Calu3 (cell line): ENCODE measurements at regions of chr1 and their contacts with region 1.

Region 1: GRCh38 chr1:67500413-67500959 is 70.3 kb upstream of the SERBP1 start:
- DNase-seq: peak; percentile 87
- H3K4me3 Mint-ChIP-seq: peak overlapping the region; percentile 36
- H3K27ac Mint-ChIP-seq: no peak overlapping the region
- H3K4me1 Mint-ChIP-seq: no peaks in the 10 kb centered on the region
- H3K27me3 Mint-ChIP-seq: peaks cover 20% of the 10 kb centered on the region
- CTCF ChIP-seq: peak; percentile 89

Region 2: GRCh38 chr1:66996018-66996682 is 504.3 kb before region 1 on chr1:
- CTCF ChIA-PET with region 1: no interaction called
- intact Hi-C with region 1: loop called (anchors 5 kb)
- DNase-seq: peak; percentile 59
- H3K4me3 Mint-ChIP-seq: no peak overlapping the region
- H3K27ac Mint-ChIP-seq: no peak overlapping the region
- H3K4me1 Mint-ChIP-seq: no peaks in the 10 kb centered on the region
- H3K27me3 Mint-ChIP-seq: no peaks in the 10 kb centered on the region
- CTCF ChIP-seq: peak; percentile 65

Region 3: GRCh38 chr1:67214420-67215174 is 285.9 kb before region 1 on chr1:
- CTCF ChIA-PET with region 1: interaction called, 19 read pairs
- intact Hi-C with region 1: loop called (anchors 2 kb)
- DNase-seq: peak; percentile 64
- H3K4me3 Mint-ChIP-seq: no peak overlapping the region
- H3K27ac Mint-ChIP-seq: no peak overlapping the region
- H3K4me1 Mint-ChIP-seq: no peaks in the 10 kb centered on the region
- H3K27me3 Mint-ChIP-seq: peaks cover 4% of the 10 kb centered on the region
- CTCF ChIP-seq: no peak

Region 4: GRCh38 chr1:67230539-67230938 is 269.9 kb before region 1 on chr1:
- CTCF ChIA-PET with region 1: interaction called, 8 read pairs
- intact Hi-C with region 1: loop called (anchors 1 kb)
- DNase-seq: no peak
- H3K4me3 Mint-ChIP-seq: no peak overlapping the region
- H3K27ac Mint-ChIP-seq: no peak overlapping the region
- H3K4me1 Mint-ChIP-seq: peaks cover 8% of the 10 kb centered on the region
- H3K27me3 Mint-ChIP-seq: peaks cover 19% of the 10 kb centered on the region
- CTCF ChIP-seq: no peak

Region 5: GRCh38 chr1:67347688-67348472 is 152.6 kb before region 1 on chr1:
- CTCF ChIA-PET with region 1: interaction called, 8 read pairs
- intact Hi-C with region 1: loop called (anchors 1 kb)
- DNase-seq: peak; percentile 19
- H3K4me3 Mint-ChIP-seq: no peak overlapping the region
- H3K27ac Mint-ChIP-seq: no peak overlapping the region
- H3K4me1 Mint-ChIP-seq: no peaks in the 10 kb centered on the region
- H3K27me3 Mint-ChIP-seq: no peaks in the 10 kb centered on the region
- CTCF ChIP-seq: peak; percentile 41

Region 6: DNA sequence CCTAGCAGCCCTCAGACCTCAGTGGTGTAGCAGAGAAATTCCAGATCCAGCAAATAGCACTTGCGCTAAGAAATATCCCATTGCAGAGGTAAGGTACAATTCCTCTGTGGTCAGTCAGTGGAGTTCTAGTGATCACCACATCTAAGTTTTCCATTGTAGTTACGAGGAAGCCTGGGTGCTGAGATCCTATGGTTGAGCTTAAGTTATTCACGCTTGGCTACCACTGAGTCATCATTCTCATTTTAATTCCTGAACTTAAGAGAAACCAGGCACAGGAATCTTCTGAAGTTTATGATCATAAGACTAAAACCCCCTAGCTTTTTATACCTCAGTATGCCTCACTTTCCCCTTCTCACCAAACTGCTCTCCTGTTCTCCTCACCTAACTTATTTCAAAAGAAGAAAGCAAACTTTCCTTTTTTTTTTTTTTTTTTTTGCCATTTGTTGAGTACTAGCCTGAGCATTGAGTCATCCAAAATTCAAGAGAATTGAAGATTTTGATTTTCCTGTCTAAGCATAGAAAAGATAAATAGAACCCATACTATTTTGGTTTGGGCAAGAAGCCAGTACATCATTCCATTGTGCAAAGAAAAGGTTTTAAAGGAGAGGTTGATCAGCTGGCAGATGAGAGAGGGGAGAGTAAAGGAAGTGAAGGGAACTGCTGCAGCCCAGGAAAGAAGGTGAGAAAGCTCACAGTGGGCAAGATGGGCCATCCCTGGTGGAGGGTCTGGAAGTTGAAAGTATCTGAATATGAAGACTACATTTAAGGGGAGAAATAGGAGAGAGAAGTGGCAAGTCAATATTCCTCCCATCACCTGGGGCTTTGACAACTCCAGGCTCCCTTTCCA is 110.2 kb before region 1 on chr1:
- CTCF ChIA-PET with region 1: no interaction called
- intact Hi-C with region 1: no loop called
- DNase-seq: no peak
- H3K4me3 Mint-ChIP-seq: no peak overlapping the region
- H3K27ac Mint-ChIP-seq: no peak overlapping the region
- H3K4me1 Mint-ChIP-seq: peaks cover 6% of the 10 kb centered on the region
- H3K27me3 Mint-ChIP-seq: no peaks in the 10 kb centered on the region
- CTCF ChIP-seq: no peak

Region 7: DNA sequence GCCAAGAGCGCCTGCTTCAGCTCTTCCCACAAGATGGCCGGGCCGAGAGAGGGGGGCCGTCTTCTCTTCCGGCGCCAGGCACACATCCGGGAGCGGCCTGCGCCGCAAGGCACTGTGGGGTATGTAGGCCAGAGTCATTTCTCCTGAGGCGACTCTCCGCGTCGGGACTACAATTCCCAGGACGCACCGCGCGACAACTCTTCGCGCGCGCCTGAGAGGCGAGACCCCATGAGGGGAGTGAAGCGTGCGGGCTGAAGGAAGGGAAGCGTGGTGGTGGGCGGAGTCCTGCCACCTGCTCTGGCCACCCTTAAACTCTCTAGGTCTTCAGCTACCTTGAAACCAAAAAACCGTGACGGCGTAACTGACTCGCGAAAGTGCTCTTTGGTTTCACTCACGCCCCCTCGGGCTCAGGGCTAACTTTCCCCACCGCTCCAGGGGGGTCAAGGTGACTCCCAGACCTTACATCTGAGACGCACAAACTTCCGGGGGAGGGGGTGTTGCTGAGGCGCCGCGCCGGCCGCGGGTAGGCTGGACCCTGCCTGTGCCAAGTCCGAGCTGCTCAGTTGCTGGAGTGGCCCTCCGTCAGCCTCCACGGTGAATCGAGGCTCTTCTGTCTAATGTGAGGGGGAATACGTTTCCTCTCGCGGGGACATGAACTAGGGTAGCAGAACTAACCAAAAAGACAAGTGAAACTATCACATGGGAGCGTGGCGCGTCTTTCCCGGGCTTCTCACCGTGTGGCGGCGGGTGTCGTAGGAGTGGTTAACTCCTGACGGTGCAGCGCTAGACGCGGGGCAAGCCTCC is 69.9 kb before region 1 on chr1 and contains the start of gene SERBP1:
- CTCF ChIA-PET with region 1: interaction called, 8 read pairs
- intact Hi-C with region 1: loop called (anchors 5 kb)
- DNase-seq: peak; percentile 95
- H3K4me3 Mint-ChIP-seq: peak within 1 kb of the TSS; percentile 98
- H3K27ac Mint-ChIP-seq: peak within 1 kb of the TSS; percentile 96
- H3K4me1 Mint-ChIP-seq: peaks cover 20% of the 10 kb centered on the region
- H3K27me3 Mint-ChIP-seq: no peaks in the 10 kb centered on the region
- CTCF ChIP-seq: no peak
- total RNA-seq, gene SERBP1: 216 and 226 TPM in 2 replicates